Right lobe of liver (tissue), 6 donors: ENCODE measurements at regions of chr1 and their contacts with region 1.

Region 1: GRCh38 chr1:7667625-7668218 is 103.4 kb upstream of the VAMP3 start:
- DNase-seq: peak; percentile 88 to 89 (median 89)
- ATAC-seq: peak; percentile 92 to 98 (median 96)
- H3K4me3 ChIP-seq: no peak overlapping the region
- H3K27ac ChIP-seq: no peak overlapping the region
- H3K4me1 ChIP-seq: peaks cover 0 to 5% (median 2%) of the 10 kb centered on the region in 4 donors
- H3K27me3 ChIP-seq: no peaks in the 10 kb centered on the region
- CTCF ChIP-seq: peak; percentile 98 to 100 (median 99)
- POLR2A ChIP-seq: no peak

Region 2: GRCh38 chr1:7752512-7753417 is 85.0 kb after region 1 on chr1:
- intact Hi-C with region 1: loop called (anchors 5 kb)
- DNase-seq: peak in 2 of 3 donors; percentile 34 to 59
- ATAC-seq: peak; percentile 88 to 96 (median 92)
- H3K4me3 ChIP-seq: peak overlapping the region in 1 of 3 donors; percentile 36
- H3K27ac ChIP-seq: no peak overlapping the region
- H3K4me1 ChIP-seq: no peaks in the 10 kb centered on the region
- H3K27me3 ChIP-seq: no peaks in the 10 kb centered on the region
- CTCF ChIP-seq: peak; percentile 75 to 85 (median 80)
- POLR2A ChIP-seq: no peak

Region 3: DNA sequence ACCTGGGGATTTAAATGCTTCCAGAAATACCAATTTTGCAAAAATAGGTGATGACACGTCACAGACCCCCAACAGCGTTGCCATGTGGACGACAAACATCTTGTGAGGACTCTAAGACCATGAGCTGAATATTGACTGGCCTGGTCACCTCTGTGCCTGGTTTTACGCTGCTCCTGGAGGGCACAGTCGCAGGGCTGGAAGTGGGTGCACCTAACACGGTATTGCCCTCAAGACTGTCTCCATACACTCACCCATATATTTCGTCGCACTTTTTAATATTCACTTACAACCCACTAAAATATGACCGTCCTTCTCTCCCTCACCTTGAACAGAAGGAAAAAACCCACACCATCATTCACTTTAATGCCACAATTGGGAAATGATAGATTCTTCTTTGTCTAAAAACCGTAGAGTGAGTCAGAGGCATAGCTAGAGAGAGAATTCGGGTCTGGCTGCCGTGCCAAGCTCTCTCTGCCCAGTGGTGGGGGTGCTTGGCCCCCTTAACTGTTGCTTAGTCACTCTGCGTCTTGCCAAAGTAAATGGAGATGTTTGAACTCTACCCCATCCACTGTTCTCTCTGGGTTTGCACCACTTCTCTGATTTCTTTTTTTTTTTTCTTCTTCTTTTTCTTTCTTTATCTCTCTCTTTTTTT is 225.9 kb after region 1 on chr1:
- intact Hi-C with region 1: loop called (anchors 10 kb)
- DNase-seq: no peak
- ATAC-seq: no peak
- H3K4me3 ChIP-seq: no peak overlapping the region
- H3K27ac ChIP-seq: no peak overlapping the region
- H3K4me1 ChIP-seq: no peaks in the 10 kb centered on the region
- H3K27me3 ChIP-seq: no peaks in the 10 kb centered on the region
- CTCF ChIP-seq: no peak
- POLR2A ChIP-seq: no peak